A673 (cell line): ENCODE measurements at regions of chr7 and their contacts with region 1.

Region 1: GRCh38 chr7:149005241-149006050 is 22.9 kb downstream of the PDIA4 start:
- DNase-seq: peak; percentile 81
- H3K4me3 ChIP-seq: no peak overlapping the region
- H3K27ac ChIP-seq: no peak overlapping the region
- H3K4me1 ChIP-seq: no peaks in the 10 kb centered on the region
- H3K27me3 ChIP-seq: no peaks in the 10 kb centered on the region
- CTCF ChIP-seq: peak; percentile 90

Region 2: GRCh38 chr7:149071641-149072437 is 66.4 kb after region 1 on chr7:
- CTCF ChIA-PET with region 1: interaction called, 30 read pairs
- POLR2A ChIA-PET with region 1: no interaction called
- intact Hi-C with region 1: loop called (anchors 2 kb)
- DNase-seq: no peak
- H3K4me3 ChIP-seq: no peak overlapping the region
- H3K27ac ChIP-seq: no peak overlapping the region
- H3K4me1 ChIP-seq: no peaks in the 10 kb centered on the region
- H3K27me3 ChIP-seq: no peaks in the 10 kb centered on the region
- CTCF ChIP-seq: 0 out of 2 replicates have a peak, but pooled peaks have one; percentile 25

Region 3: DNA sequence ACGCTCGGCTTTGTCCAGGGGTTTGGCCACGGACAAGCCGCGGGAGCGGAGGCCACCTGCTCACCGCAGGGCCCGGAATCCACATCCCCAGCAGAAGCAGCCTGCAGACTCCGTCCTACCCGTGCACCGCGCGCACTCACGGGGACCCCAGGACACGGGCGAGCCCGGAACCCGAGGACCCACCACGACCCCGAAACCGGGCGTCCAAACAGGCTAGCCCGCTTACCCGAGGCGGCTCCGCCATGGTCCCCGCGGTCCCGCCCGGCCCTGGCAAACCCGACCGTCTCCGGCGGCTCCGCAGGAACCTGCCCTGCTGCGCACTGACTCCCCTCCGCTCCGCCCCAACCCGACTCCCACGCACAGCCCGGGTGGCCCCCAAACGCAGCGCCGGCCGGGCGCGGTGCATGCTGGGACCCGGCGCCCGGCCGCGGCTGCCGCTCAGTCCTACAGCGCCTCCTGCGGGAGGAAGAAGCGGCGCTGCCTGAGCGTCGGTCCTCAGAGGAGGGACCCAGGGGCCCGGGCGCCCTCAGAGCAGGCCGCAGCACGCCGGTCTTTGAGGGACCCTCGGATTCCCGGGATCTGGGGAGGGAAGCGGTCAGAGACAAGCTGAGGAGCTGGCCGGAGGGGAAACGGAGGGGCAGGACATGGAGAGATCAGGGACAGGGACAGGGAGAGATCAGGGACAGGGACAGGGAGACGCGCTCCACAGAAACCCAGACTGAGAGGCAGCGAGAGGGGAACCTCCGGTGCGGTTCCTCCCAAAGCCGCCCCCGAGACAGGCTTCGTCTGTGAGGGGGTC is 85.2 kb after region 1 on chr7 and contains the start of gene ZNF786:
- CTCF ChIA-PET with region 1: no interaction called
- POLR2A ChIA-PET with region 1: no interaction called
- intact Hi-C with region 1: loop called (anchors 1 kb)
- DNase-seq: peak; percentile 97
- H3K4me3 ChIP-seq: peak within 1 kb of the TSS; percentile 67
- H3K27ac ChIP-seq: peak within 1 kb of the TSS; percentile 85
- H3K4me1 ChIP-seq: no peaks in the 10 kb centered on the region
- H3K27me3 ChIP-seq: no peaks in the 10 kb centered on the region
- CTCF ChIP-seq: peak; percentile 84
- total RNA-seq, gene ZNF786: 9.8 and 9.9 TPM in 2 replicates

Region 4: DNA sequence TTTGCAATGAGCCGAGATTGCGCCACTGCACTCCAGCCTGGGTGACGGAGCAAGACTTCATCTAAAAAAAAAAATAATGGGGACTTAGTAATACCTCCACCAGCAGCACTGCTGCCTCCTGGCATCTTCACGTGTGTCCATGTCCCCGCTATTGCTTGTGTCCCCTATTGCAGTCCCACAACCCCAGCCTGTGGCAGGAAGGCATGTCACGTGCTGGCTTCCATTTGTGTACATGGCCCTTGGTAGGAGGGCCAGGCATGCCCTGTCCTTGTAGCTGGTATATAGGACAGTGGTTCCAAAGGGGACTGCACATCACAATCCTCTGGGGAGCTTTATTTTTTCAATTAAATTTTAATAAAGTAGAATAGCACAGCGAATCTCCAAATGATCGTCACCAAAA is 262.3 kb after region 1 on chr7:
- CTCF ChIA-PET with region 1: no interaction called
- POLR2A ChIA-PET with region 1: no interaction called
- intact Hi-C with region 1: no loop called
- DNase-seq: no peak
- H3K4me3 ChIP-seq: no peak overlapping the region
- H3K27ac ChIP-seq: no peak overlapping the region
- H3K4me1 ChIP-seq: no peaks in the 10 kb centered on the region
- H3K27me3 ChIP-seq: no peaks in the 10 kb centered on the region
- CTCF ChIP-seq: no peak